K562 (cell line): ENCODE measurements at regions of chr15 and their contacts with region 1.

Region 1: DNA sequence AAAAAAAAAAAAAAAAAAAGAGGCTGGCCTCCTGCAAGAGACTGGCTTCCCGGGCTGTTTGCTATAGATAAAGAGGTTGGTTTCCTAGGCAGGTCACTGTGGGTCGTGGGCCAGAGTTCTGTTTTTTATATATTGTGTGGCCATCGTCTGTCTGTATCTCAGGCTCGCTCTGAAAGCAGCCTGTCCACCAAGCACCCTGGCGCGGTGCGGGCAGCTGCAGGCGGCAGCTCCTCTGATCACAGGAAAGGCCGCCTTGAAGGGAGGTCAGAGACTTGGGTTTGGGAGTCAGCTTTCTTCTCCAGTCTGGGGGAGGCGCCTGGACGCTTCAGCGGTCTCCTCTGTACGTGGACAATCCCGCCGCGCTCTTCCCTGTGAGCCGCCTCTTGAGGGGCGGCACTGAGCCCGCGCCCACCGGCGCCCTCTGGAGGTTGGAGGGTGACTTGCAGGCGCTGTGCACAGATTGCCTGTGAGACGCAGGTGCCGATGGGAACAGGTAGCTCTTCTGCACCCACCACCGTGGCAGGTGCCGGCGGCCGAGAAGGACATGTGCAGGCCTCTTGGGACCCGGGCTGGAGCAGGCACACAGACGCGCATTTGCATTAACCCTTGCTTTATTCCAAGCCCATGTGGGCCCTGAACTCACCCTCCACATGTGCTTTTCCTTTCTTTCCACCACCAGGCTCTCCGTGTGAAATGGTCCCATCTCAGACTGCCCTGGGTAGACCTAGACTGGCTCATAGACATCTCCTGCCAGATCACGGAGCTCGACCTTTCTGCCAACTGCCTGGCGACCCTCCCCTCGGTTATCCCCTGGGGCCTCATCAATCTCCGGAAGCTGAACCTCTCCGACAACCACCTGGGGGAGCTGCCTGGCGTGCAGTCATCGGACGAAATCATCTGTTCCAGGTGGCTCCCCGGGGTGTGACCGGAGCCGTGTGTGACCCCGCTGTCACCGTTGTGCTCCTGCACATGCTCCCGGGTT is 89.3 kb downstream of the LRRK1 start:
- DNase-seq: peak; percentile 85 to 92 (median 88)
- ATAC-seq: peak; percentile 93
- H3K4me3 ChIP-seq: peak overlapping the region; percentile 63
- H3K27ac ChIP-seq: peak overlapping the region; percentile 79
- H3K4me1 ChIP-seq: peaks cover 14 to 25% of the 10 kb centered on the region in 2 experiments
- H3K27me3 ChIP-seq: peaks cover 5 to 18% of the 10 kb centered on the region in 2 experiments; a peak in 3 of 5 replicates
- CTCF ChIP-seq: peak; percentile 94 to 97 (median 95)
- EP300 ChIP-seq: no peak
- POLR2A ChIP-seq: peak; percentile 58; the same call in 1 of the 2 replicates
- RAD21 ChIP-seq: peak; percentile 17 to 47; a peak in 3 of 4 replicates

Region 2: DNA sequence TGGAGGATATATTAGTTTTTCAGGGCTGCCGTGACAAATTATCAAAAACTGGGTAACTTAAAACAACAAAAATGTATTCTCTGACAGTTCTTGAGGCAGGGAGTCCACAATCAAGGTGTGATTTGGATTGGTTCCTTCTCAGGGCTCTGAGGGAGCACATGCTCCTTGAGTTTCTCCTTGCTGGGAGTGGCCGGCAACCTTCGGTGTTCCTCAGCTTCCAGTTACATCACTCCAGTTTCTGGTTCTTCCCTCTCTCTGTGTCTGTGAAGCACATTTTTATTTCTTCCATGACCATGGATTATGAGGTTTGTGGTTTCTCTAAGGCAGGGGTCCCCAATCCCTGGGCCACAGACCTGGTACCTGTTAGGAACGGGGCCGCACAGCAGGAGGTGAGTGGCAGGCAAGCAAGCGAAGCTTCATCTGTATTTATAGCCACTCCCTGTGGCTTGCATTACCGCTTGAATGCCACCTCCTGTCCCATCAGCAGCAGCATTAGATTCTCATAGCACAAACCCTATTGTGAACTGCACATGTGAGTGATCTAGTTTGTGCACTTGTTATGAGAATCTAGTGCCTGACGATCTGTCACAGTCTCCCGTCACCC is 1732.8 kb before region 1 on chr15:
- CTCF ChIA-PET with region 1: no interaction called
- POLR2A ChIA-PET with region 1: no interaction called
- in situ Hi-C with region 1: no loop called
- intact Hi-C with region 1: loop called (anchors 10 kb)
- DNase-seq: no peak
- ATAC-seq: no peak
- H3K4me3 ChIP-seq: no peak overlapping the region
- H3K27ac ChIP-seq: no peak overlapping the region
- H3K4me1 ChIP-seq: no peaks in the 10 kb centered on the region
- H3K27me3 ChIP-seq: no peaks in the 10 kb centered on the region
- CTCF ChIP-seq: no peak
- EP300 ChIP-seq: no peak
- POLR2A ChIP-seq: no peak
- RAD21 ChIP-seq: no peak

Region 3: GRCh38 chr15:100349696-100350433 is 658.6 kb before region 1 on chr15:
- CTCF ChIA-PET with region 1: interaction called, 3 read pairs
- POLR2A ChIA-PET with region 1: no interaction called
- in situ Hi-C with region 1: no loop called
- intact Hi-C with region 1: loop called (anchors 1 kb)
- DNase-seq: peak; percentile 84 to 91 (median 89)
- ATAC-seq: peak; percentile 99
- H3K4me3 ChIP-seq: peak overlapping the region; percentile 51
- H3K27ac ChIP-seq: peak overlapping the region; percentile 61; the same call in 2 of the 3 replicates
- H3K4me1 ChIP-seq: peaks cover 0 to 12% of the 10 kb centered on the region in 2 experiments; a peak in 3 of 5 replicates
- H3K27me3 ChIP-seq: peaks cover 0 to 10% of the 10 kb centered on the region in 2 experiments; a peak in 2 of 5 replicates
- CTCF ChIP-seq: peak; percentile 85 to 89 (median 87)
- EP300 ChIP-seq: no peak
- POLR2A ChIP-seq: no peak
- RAD21 ChIP-seq: peak in 1 of 2 experiments; percentile 47; a peak in 2 of 4 replicates

Region 4: DNA sequence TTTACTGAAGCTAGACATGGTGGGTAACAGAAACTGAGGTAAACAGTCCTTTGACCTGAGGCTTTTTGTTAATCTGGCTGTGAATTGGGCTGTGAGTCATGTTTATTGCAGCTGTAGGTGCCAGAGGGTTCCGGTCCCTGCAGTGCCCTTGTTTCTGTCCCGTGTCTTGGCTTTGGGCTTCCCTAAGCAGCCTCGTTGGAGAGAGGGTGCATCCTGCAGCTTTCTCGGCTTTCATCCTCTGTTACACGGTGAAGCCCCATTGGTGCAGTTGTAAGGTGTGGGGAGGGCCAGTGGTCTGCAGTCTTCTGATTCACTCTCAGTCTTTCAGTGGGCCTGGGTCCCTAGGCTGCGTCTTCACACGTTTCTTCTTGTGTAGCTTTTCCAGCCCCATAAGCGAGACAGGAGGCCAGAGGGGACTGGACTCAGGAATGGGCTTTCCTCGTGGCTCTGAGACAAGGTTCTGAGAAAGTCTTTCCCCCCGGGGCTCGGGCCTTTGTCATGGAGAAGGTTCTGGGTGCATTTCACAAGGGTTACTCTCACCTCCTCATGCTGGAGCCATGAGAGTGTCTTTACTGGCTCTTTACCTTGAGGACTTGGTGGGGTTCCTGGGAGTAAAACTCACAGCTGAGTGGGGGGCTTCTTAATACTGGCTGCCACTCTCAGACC is 372.9 kb before region 1 on chr15:
- CTCF ChIA-PET with region 1: interaction called, 3 read pairs
- POLR2A ChIA-PET with region 1: no interaction called
- in situ Hi-C with region 1: loop called (anchors 5 kb)
- intact Hi-C with region 1: no loop called
- DNase-seq: no peak
- ATAC-seq: no peak
- H3K4me3 ChIP-seq: no peak overlapping the region
- H3K27ac ChIP-seq: no peak overlapping the region
- H3K4me1 ChIP-seq: no peaks in the 10 kb centered on the region; a peak in 1 of 5 replicates
- H3K27me3 ChIP-seq: no peaks in the 10 kb centered on the region
- CTCF ChIP-seq: no peak
- EP300 ChIP-seq: no peak
- POLR2A ChIP-seq: no peak
- RAD21 ChIP-seq: no peak

Region 5: GRCh38 chr15:100873029-100873677 is 135.3 kb before region 1 on chr15:
- CTCF ChIA-PET with region 1: no interaction called
- POLR2A ChIA-PET with region 1: no interaction called
- in situ Hi-C with region 1: no loop called
- intact Hi-C with region 1: loop called (anchors 1 kb)
- DNase-seq: peak; percentile 55 to 62 (median 62)
- ATAC-seq: peak; percentile 81
- H3K4me3 ChIP-seq: no peak overlapping the region
- H3K27ac ChIP-seq: no peak overlapping the region
- H3K4me1 ChIP-seq: no peaks in the 10 kb centered on the region
- H3K27me3 ChIP-seq: peaks cover 0 to 10% of the 10 kb centered on the region in 2 experiments; a peak in 2 of 5 replicates
- CTCF ChIP-seq: peak; percentile 63 to 80 (median 74)
- EP300 ChIP-seq: no peak
- POLR2A ChIP-seq: no peak
- RAD21 ChIP-seq: peak; percentile 53 to 76

Region 6: DNA sequence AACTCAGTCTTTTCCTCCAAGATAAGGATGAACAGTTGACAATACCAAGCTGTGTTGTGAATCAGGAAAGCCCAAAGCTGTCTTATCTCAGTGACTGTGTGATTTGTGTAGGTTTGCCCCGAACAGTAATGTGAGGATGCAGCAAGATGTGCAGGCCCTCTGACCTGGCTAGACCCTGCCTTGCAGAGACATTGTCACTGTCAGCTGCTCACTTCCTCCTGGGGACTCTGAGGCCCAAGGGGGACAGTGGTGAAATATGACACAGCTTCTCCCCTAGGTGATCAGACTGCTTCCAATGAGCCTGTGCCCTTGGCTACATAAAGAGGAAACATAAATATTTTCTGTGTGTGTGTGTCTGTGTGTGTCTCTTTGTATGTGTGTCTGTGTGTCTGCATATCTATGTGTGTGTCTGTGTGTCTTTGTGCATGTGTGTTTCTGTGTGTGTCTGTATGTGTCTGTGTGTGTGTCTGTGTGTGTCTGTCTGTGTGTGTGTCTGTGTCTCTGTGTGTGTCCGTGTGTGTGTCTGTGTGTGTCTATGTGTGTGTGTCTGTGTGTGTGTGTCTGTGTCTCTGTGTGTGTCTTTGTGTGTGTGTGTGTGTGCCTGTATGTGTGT is 67.6 kb before region 1 on chr15:
- CTCF ChIA-PET with region 1: no interaction called
- POLR2A ChIA-PET with region 1: no interaction called
- in situ Hi-C with region 1: loop called (anchors 5 kb)
- intact Hi-C with region 1: no loop called
- DNase-seq: no peak
- ATAC-seq: no peak
- H3K4me3 ChIP-seq: no peak overlapping the region
- H3K27ac ChIP-seq: no peak overlapping the region
- H3K4me1 ChIP-seq: no peaks in the 10 kb centered on the region; a peak in 1 of 5 replicates
- H3K27me3 ChIP-seq: peaks cover 11 to 20% of the 10 kb centered on the region in 2 experiments; a peak in 3 of 5 replicates
- CTCF ChIP-seq: no peak
- EP300 ChIP-seq: no peak
- POLR2A ChIP-seq: no peak
- RAD21 ChIP-seq: no peak

Region 7: DNA sequence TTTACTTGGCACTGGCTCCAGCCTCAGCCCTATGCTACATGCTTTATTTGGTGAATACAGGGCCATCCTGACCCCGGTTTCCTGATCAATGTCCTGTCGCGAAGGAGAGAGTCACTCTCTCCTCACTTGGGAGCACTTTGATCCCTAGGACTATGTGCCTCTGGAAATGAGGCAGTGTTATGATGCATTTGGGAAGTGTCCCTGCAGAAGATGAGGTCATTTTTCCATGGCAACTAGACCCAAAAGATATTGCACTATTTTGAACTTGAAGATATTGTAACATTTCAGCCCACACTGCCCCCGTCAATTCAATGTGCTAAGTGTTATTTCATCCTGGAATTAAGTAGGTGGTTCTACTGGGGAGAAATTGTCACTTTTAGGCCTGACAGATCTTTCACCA is 21.3 kb before region 1 on chr15:
- CTCF ChIA-PET with region 1: no interaction called
- POLR2A ChIA-PET with region 1: no interaction called
- in situ Hi-C with region 1: no loop called
- intact Hi-C with region 1: no loop called
- DNase-seq: no peak
- ATAC-seq: no peak
- H3K4me3 ChIP-seq: no peak overlapping the region
- H3K27ac ChIP-seq: no peak overlapping the region
- H3K4me1 ChIP-seq: no peaks in the 10 kb centered on the region
- H3K27me3 ChIP-seq: peaks cover 3 to 15% of the 10 kb centered on the region in 2 experiments; a peak in 3 of 5 replicates
- CTCF ChIP-seq: no peak
- EP300 ChIP-seq: no peak
- POLR2A ChIP-seq: no peak
- RAD21 ChIP-seq: no peak

Region 8: GRCh38 chr15:101031213-101031612 is 22.8 kb after region 1 on chr15:
- CTCF ChIA-PET with region 1: no interaction called
- POLR2A ChIA-PET with region 1: no interaction called
- in situ Hi-C with region 1: no loop called
- intact Hi-C with region 1: no loop called
- DNase-seq: no peak
- ATAC-seq: 0 out of 3 replicates have a peak, but pooled peaks have one; percentile 25
- H3K4me3 ChIP-seq: no peak overlapping the region
- H3K27ac ChIP-seq: no peak overlapping the region
- H3K4me1 ChIP-seq: peaks cover 0 to 5% of the 10 kb centered on the region in 2 experiments; a peak in 2 of 5 replicates
- H3K27me3 ChIP-seq: peaks cover 30 to 46% of the 10 kb centered on the region in 2 experiments; a peak in 4 of 5 replicates
- CTCF ChIP-seq: no peak
- EP300 ChIP-seq: no peak
- POLR2A ChIP-seq: no peak
- RAD21 ChIP-seq: no peak